Activated B cell treated with CpG ODN at 0.5 μM for 24 hours (primary cell): ENCODE measurements at regions of chr18 and their contacts with region 1.

Region 1: DNA sequence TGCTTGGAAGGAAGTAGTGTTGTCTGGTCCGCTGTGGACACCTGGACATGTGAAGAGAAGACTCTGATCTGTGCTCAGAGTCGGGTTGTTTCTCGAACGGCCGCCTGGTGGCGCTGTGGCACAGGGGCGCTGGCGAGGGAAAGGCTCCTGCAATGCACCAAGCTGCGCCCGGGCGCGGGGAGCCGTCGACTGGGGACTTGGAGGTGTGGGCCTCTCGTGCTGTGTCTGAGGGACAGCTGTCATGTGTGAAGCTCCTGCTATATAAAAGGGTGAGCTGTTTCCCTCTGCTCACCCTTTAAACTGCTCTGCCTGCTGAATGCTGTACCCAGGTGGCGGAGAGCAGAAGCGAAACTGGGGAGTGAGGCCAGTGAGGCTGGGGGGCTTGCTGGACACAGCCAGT is 44.0 kb downstream of the GNAL start:
- DNase-seq: peak; percentile 53
- ATAC-seq: peak; percentile 54
- H3K4me3 Mint-ChIP-seq: peak overlapping the region; percentile 17
- H3K27ac Mint-ChIP-seq: no peak overlapping the region
- H3K4me1 Mint-ChIP-seq: peaks cover 6% of the 10 kb centered on the region
- H3K27me3 Mint-ChIP-seq: peaks cover 25% of the 10 kb centered on the region
- CTCF ChIP-seq: peak; percentile 30

Region 2: GRCh38 chr18:11872479-11873136 is 139.6 kb after region 1 on chr18:
- CTCF ChIA-PET with region 1: no interaction called
- POLR2A ChIA-PET with region 1: no interaction called
- intact Hi-C with region 1: loop called (anchors 2 kb)
- DNase-seq: no peak
- ATAC-seq: no peak
- H3K4me3 Mint-ChIP-seq: no peak overlapping the region
- H3K27ac Mint-ChIP-seq: no peak overlapping the region
- H3K4me1 Mint-ChIP-seq: peaks cover 9% of the 10 kb centered on the region
- H3K27me3 Mint-ChIP-seq: peaks cover 4% of the 10 kb centered on the region
- CTCF ChIP-seq: no peak

Region 3: GRCh38 chr18:11937874-11938478 is 204.9 kb after region 1 on chr18:
- CTCF ChIA-PET with region 1: interaction called, 6 read pairs
- POLR2A ChIA-PET with region 1: no interaction called
- intact Hi-C with region 1: loop called (anchors 1 kb)
- DNase-seq: peak; percentile 47
- ATAC-seq: peak; percentile 62
- H3K4me3 Mint-ChIP-seq: no peak overlapping the region
- H3K27ac Mint-ChIP-seq: no peak overlapping the region
- H3K4me1 Mint-ChIP-seq: no peaks in the 10 kb centered on the region
- H3K27me3 Mint-ChIP-seq: no peaks in the 10 kb centered on the region
- CTCF ChIP-seq: peak; percentile 34

Region 4: DNA sequence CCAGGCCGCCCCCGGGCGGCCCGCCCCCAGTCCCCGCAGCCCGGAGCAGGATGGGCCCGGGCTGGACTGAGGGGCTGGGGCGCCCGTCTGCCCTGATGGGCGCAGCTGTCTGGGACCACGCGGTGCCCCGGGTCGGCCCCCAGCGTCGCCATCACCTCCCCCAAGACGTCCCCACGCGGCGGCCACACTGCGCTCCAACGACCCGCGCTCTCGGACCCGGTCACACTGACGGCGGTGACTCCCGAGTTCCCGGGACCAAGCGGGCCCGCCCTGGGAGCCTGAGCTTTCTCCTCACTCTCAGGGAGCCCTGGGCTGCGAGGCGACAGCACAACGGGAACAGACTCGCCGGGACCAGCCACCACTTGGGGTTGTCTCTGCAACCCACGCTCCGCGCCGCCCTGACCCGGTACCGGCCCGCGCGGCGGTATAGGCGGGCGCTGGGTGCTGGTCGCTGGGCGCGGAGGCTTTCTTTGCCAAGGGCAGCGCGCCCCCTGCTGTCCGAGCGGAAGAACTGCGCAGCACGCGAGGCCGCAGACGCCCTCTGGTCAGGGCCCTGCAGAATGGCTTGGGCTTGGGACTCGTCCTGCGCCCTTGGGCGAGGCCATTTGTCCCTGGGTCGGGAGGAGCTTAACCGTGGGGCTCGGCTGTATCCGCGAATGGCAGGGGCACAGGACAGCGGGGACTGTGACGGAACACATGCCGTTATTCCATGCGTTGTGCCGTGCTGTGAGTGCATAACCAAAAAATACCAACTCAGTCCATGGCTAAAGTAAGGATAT is 305.8 kb after region 1 on chr18:
- CTCF ChIA-PET with region 1: interaction called, 24 read pairs
- POLR2A ChIA-PET with region 1: no interaction called
- intact Hi-C with region 1: loop called (anchors 1 kb)
- DNase-seq: peak; percentile 76
- ATAC-seq: peak; percentile 98
- H3K4me3 Mint-ChIP-seq: peak overlapping the region; percentile 76
- H3K27ac Mint-ChIP-seq: no peak overlapping the region
- H3K4me1 Mint-ChIP-seq: peaks cover 12% of the 10 kb centered on the region
- H3K27me3 Mint-ChIP-seq: peaks cover 7% of the 10 kb centered on the region
- CTCF ChIP-seq: peak; percentile 83